ENCODE measurements at regions of chr11 and their contacts with region 1.

Region 1: DNA sequence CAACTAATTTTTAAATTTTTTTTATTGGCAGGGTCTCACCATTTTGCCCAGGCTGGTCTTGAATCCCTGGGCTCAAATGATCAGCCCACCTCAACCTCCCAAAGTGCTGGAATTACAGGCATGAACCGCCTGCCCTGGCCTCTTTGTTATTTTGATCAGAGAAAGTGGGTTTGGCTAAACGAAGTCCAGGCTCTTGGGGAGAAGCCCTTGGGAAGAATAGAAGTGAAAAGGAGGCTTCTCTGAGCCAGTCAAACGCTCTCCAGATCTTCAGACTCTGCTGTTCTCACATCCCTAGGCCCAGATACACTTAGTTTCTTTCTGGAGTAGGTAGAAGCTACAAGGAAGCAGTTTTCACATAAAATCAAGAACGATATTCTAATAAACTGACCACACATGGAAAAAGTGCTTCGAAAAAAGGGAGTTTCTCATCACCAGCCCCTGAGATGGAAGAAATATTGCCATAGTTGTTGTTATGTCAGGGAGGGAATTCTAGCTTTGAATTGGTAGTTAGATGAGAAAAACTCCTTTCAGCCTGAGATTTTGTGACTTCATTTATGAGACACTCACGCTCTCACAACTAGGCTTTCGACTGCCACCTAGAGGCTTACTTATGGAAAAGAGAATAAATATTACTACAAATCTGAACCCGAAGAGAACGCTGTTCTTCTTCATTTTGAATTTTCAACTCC is 41.7 kb upstream of the AQP11 start:
- DNase-seq: peak; percentile 61
- ATAC-seq: no peak
- H3K4me3 Mint-ChIP-seq: no peak overlapping the region
- H3K27ac Mint-ChIP-seq: no peak overlapping the region
- H3K4me1 Mint-ChIP-seq: peaks cover 3% of the 10 kb centered on the region
- H3K27me3 Mint-ChIP-seq: no peaks in the 10 kb centered on the region

Region 2: DNA sequence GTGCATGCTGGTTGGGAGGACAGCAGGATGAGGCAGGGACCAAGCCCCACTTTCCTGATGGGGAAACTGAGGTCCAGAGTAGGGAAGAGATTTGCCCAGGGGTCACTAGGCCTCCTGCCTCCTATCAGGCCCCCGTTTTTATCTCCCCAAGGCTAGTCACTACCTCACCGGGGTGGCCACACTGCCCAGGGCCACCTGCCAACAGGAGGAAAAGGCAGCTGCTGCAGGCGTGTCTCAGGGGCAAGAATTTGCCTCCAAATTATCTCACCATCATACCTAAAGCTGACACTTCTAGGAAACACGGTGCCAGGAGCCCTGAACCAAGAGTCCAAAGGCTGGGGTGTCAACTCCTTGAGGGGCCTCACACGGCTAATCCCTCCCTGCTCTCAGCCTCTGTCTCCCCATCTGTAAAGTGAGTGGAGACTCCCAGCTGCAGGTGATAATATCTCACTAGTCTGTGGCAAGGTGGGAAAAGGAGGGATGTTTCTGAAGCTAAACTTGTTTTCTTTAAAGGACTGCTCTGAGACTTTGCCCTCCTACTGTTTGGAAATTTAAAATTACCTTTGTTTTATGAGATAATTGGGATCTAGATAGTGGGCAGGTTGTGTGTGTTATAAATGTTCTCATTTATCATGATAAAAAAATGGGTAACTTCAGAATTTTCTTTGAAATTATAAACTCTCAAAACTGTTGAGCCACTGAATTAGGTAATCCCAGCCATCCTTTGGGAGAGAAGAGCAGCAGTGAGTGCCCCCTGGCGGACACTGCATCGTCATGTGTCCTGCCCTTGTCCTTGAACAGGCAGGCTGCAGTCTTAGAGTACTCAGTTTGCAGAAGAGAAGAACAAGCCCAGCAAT is 360.0 kb before region 1 on chr11:
- CTCF ChIA-PET with region 1: interaction called, 28 read pairs
- POLR2A ChIA-PET with region 1: no interaction called
- DNase-seq: peak; percentile 83
- ATAC-seq: peak; percentile 83
- H3K4me3 Mint-ChIP-seq: no peak overlapping the region
- H3K27ac Mint-ChIP-seq: no peak overlapping the region
- H3K4me1 Mint-ChIP-seq: no peaks in the 10 kb centered on the region
- H3K27me3 Mint-ChIP-seq: peaks cover 4% of the 10 kb centered on the region

Region 3: DNA sequence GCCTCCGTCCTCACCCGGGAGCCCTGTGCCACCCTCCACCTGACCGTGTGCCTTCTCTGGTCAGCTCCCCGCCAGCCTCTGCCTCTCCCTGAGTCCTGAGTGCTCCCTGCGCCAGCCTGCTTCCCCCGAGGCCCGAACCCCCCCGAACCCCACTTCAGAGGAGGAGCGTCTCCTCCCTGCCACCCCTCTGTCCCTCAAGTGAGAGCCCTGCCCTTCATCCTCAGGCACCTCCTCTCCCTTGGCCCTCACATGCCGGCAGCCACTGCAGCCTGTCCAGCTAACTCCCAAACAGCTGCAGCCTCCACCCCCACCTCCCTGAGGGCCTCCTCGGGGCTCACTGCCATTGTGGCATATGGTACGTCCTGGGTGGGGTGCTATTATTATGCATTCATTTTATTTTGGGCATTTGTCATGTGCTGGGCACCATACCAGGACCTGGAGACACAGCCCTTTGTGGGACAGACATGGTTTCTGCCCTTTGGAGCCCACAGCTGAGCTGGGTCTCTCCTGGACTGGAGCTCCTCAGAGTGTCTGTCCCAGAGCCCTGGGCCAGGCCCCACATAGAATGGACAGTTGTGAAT is 352.7 kb before region 1 on chr11:
- CTCF ChIA-PET with region 1: interaction called, 16 read pairs
- POLR2A ChIA-PET with region 1: no interaction called
- DNase-seq: no peak
- ATAC-seq: no peak
- H3K4me3 Mint-ChIP-seq: no peak overlapping the region
- H3K27ac Mint-ChIP-seq: no peak overlapping the region
- H3K4me1 Mint-ChIP-seq: no peaks in the 10 kb centered on the region
- H3K27me3 Mint-ChIP-seq: no peaks in the 10 kb centered on the region

Region 4: GRCh38 chr11:77411717-77412441 is 136.1 kb before region 1 on chr11:
- CTCF ChIA-PET with region 1: interaction called, 15 read pairs
- POLR2A ChIA-PET with region 1: no interaction called
- DNase-seq: peak; percentile 88
- ATAC-seq: peak; percentile 99
- H3K4me3 Mint-ChIP-seq: peak overlapping the region; percentile 90
- H3K27ac Mint-ChIP-seq: peak overlapping the region; percentile 91
- H3K4me1 Mint-ChIP-seq: peaks cover 51% of the 10 kb centered on the region
- H3K27me3 Mint-ChIP-seq: no peaks in the 10 kb centered on the region

Region 5: GRCh38 chr11:77619576-77620198 is 71.7 kb after region 1 on chr11:
- CTCF ChIA-PET with region 1: interaction called, 13 read pairs
- POLR2A ChIA-PET with region 1: no interaction called
- DNase-seq: peak; percentile 46
- ATAC-seq: no peak
- H3K4me3 Mint-ChIP-seq: no peak overlapping the region
- H3K27ac Mint-ChIP-seq: no peak overlapping the region
- H3K4me1 Mint-ChIP-seq: no peaks in the 10 kb centered on the region
- H3K27me3 Mint-ChIP-seq: no peaks in the 10 kb centered on the region

Region 6: GRCh38 chr11:77658213-77659013 is 110.4 kb after region 1 on chr11:
- CTCF ChIA-PET with region 1: no interaction called
- POLR2A ChIA-PET with region 1: no interaction called
- DNase-seq: no peak
- ATAC-seq: no peak
- H3K4me3 Mint-ChIP-seq: no peak overlapping the region
- H3K27ac Mint-ChIP-seq: no peak overlapping the region
- H3K4me1 Mint-ChIP-seq: no peaks in the 10 kb centered on the region
- H3K27me3 Mint-ChIP-seq: peaks cover 2% of the 10 kb centered on the region

Measured in activated CD8-positive, alpha-beta T cell treated with anti-CD3 and anti-CD28 coated beads, Interleukin-2, amount 10 ng/mL, durations not matched to agents 7 days and 5 days (primary cell).